ENCODE measurements at regions of chr16 and their contacts with region 1.

Region 1: GRCh38 chr16:56866943-56867830 is 2.2 kb downstream of the SLC12A3 start:
- DNase-seq: no peak
- H3K4me3 ChIP-seq: no peak overlapping the region
- CTCF ChIP-seq: peak; percentile 49

Region 2: GRCh38 chr16:56609463-56609921 is 257.7 kb before region 1 on chr16:
- CTCF ChIA-PET with region 1: no interaction called
- POLR2A ChIA-PET with region 1: no interaction called
- DNase-seq: peak; percentile 60
- H3K4me3 ChIP-seq: peak overlapping the region; percentile 74
- CTCF ChIP-seq: peak; percentile 7

Region 3: DNA sequence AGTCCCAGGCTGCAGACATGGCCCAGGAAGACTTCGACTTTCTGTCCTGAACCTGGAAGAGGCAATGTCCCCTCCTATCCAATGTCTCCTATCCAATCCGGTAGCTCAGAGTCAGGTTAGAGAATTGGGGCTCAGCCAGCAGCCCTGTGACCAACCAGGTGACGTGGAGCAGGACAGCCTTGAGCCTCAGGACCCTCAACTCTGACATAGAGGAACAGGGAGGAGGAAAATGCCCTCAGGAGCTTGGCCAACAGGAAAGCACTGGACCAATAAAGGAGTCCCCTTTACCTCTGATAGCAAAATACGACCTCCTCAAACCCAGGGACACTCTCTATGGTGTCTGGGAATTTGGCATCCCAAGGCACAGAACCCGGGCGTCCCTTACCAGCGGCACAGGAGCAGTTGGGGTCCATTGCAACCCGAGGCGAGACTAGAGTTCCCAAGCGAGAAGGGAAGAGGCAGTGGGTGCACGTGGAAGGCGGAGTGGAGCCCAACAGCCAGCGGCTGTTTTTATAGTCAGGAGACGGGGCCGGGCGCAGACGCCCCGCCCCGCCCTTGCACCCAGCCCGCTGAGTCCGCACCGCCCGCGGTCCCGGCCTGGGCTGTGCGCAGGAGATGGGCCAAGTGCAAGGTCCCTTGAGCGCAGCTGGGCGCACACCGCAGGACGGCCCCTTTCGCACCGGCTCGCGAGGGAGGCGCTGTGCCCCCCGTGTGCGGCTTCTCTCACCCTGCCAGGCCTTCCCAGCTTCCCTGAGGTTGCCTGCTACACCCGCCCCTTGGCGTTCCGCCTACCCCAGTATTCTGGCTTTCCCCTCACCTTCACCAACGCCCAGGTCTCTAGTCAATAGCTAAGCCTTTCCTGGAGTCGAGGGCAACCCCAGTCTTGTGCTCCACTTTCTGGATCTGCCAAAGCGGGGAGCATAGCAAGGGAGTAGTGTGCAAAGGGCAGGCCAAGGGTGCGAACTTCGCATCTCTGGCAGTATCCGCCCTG is 199.3 kb before region 1 on chr16 and contains the start of gene MT1G:
- CTCF ChIA-PET with region 1: no interaction called
- POLR2A ChIA-PET with region 1: no interaction called
- DNase-seq: no peak
- H3K4me3 ChIP-seq: no peak within 1 kb of the TSS
- CTCF ChIP-seq: no peak

Region 4: GRCh38 chr16:56841233-56841632 is 26.0 kb before region 1 on chr16:
- CTCF ChIA-PET with region 1: interaction called, 199 read pairs
- POLR2A ChIA-PET with region 1: no interaction called
- DNase-seq: no peak
- H3K4me3 ChIP-seq: no peak overlapping the region
- CTCF ChIP-seq: no peak

Region 5: DNA sequence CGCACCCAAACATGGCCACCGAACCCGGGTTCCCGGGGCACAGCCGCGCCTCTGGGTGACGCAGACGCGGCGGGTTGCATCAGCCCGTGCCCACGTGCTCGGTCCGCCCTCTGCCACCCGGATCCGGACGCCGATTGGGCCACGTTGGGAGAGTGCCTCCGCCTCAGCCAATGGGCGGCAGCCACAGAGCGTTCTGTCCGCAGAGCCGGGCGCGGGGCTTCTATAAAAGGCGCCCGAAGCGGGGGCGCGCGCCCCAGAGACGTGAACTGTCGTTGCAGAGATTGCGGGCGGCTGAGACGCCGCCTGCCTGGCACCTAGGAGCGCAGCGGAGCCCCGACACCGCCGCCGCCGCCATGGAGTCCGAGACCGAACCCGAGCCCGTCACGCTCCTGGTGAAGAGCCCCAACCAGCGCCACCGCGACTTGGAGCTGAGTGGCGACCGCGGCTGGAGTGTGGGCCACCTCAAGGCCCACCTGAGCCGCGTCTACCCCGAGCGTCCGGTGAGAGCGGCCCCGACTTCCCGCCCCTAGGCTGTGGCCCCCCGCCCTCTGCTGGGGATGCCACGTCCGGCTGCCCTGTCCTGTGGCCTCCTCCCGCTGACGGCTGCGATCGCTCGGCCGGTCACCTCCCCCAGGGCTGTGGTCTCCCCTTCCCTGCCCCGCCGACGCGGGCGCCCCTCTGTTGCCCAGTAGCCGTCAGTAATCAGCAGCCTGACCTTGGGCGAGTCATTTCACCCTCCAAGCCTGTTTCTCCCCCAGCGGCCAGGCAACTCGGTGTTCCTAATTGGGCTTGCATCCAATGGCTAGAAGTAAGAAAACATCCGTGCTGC is 64.9 kb after region 1 on chr16 and contains the start of gene HERPUD1:
- CTCF ChIA-PET with region 1: interaction called, 15 read pairs
- POLR2A ChIA-PET with region 1: interaction called, 3 read pairs
- DNase-seq: peak; percentile 82
- H3K4me3 ChIP-seq: peak within 1 kb of the TSS; percentile 89
- CTCF ChIP-seq: peak; percentile 2

Region 6: DNA sequence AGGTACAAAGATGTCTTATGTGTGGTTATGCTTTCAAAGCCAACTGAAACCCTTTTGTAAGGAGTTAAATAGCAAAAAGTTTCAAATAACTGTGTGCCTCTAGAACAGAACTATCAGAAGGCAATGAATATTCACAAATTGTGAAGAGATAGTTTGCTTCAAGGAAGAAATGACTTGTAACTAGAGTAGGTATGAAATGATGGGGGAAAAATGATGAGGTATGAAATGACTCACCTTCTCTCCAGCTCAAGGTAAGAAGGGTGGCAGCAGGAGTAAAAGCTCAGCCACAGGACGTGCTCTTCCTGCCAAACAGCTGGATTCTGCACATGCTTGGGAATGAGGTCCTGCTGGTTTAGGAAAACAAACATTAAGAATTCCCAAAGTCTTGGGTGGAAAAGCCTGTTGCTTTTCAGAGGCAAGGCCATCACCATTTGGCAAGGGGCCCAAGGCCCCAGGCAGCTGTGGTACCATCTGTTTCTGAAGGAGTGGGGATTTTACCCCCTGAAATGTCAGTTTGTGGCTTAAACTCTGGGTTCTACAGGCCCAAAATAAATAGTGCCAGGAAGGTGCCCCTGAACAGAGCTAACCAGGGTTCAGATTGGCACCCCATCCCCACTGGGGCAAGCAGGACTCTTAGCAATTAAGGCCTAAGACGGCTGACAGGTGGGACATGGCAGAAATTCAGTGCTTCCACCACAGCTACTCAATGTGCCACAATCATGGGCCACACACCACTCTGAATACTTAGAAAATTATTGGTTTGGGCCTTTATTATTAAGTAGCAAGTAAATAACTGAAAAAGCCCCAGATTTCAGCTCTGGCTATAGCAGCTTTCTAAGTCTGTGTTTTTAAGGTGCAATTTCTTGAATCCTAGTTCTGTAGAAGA is 78.0 kb after region 1 on chr16:
- CTCF ChIA-PET with region 1: interaction called, 99 read pairs
- POLR2A ChIA-PET with region 1: no interaction called
- DNase-seq: no peak
- H3K4me3 ChIP-seq: no peak overlapping the region
- CTCF ChIP-seq: no peak

Region 7: GRCh38 chr16:56956756-56957155 is 89.6 kb after region 1 on chr16:
- CTCF ChIA-PET with region 1: interaction called, 99 read pairs
- POLR2A ChIA-PET with region 1: no interaction called
- DNase-seq: no peak
- H3K4me3 ChIP-seq: no peak overlapping the region
- CTCF ChIP-seq: no peak